Activated T-helper 2 cell treated with anti-CD3 and anti-CD28 coated beads, Interferon-gamma antibody, Interleukin-2, Interleukin-4, amounts not matched to agents 10 μg/mL and 5 μg/mL and 100 μg/mL, durations not matched to agents 14 hours and 24 hours and 36 hours (primary cell): ENCODE measurements at regions of chr14 and their contacts with region 1.

Region 1: DNA sequence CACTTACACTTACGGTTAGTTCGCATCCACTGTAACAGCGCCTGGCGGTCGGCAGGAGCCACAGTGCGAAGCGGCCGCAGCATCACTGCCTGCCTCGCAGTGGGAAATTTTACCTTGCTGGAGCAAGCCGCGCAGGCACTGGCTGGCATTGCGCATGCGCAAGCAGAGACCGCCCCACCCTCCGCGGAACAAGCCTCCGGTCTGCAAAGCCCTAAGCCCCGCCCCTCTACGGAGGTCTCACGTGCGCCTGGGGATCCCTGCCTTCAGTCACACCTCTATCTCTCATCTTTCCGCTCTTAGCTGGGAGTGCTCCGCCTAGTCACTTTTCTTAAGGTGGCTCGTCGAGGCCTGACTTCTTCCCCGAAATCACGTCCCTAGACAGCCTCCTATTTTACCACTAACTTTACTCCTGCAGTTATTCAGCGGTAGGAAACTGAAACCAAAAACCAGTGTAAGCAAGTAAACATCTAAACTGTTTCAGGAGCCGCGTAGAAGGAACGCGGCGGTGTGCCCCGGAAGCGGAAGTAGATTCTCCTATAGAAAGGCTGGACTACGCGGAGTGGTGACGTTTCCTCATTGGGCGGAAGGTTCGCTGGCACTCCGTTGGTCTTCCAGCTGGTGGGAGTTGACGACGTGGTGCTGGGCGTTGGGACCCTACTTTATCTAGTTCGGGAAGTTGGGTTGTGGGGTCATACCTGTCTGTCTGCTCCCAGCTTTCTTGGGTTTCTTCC is at the start of gene SRP54:
- DNase-seq: peak; percentile 100
- H3K4me3 Mint-ChIP-seq: no peak within 1 kb of the TSS
- H3K27ac Mint-ChIP-seq: no peak within 1 kb of the TSS
- H3K4me1 Mint-ChIP-seq: peaks cover 20% of the 10 kb centered on the region
- H3K27me3 Mint-ChIP-seq: no peaks in the 10 kb centered on the region
- total RNA-seq, gene SRP54: 78.9 and 82.4 TPM in 2 replicates

Region 2: DNA sequence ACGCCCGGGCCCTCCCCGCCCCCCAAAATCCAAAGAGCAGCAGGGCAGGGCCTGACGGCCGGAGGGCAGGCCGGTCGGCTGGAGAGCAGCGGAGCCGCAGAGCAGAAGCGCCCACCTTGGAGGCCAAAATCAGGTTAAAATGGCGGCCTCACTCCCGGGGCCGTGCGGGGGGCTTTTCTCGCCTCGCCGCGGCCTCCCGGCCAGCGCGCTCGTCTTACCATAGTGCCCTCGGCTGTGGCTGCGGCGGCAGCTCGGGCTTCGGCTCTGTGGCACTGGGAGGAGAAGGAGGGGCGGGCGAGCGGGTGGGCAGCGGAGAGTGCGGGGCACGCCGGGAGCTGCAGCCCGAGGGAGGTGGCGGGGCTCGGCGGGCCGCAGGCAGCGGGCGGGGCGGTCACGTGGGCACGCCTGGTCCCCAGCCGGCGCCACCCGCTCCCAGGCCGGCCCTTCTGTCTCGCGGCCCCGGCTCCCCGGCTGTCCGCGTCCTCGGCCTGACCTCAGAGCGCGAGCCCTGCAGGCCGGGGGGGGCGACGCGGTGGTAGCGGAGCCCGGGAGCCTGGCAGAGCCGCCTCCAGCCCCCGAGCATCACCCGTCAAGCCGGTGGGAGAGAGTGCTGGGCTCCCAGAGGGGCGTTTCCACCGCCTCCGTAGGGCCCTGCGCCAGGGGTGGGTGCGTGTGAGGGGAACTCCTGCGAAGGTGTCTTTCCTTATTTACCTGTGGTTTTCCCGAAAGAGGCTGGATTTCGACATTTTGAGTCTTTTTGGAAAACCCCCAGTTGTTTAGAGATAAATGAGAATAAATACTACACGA is 268.1 kb before region 1 on chr14 and contains the start of gene CFL2:
- intact Hi-C with region 1: loop called (anchors 5 kb)
- DNase-seq: peak; percentile 57
- H3K4me3 Mint-ChIP-seq: peak within 1 kb of the TSS; percentile 89
- H3K27ac Mint-ChIP-seq: peak within 1 kb of the TSS; percentile 90
- H3K4me1 Mint-ChIP-seq: peaks cover 28% of the 10 kb centered on the region
- H3K27me3 Mint-ChIP-seq: peaks cover 16% of the 10 kb centered on the region
- total RNA-seq, gene CFL2: 7.1 and 8.4 TPM in 2 replicates

Region 3: DNA sequence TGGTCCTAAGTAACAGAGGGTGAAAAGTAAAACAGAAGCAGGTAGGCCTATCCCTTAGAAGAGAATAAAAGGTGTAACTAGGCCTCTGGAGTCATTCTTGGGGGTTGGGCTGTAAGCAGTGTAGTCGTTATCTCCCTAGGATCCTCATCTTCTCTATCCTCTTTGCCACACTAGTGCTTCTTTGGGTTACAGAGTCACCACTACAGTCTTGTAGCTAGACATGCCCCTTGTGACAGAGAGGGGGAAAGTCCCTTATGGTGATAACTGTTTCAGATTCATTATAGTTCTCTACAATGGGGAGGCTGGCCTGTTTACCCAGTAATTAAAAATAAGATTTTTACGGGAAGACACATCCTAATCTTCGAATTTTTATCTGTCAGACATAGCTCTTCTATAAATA is 16.2 kb before region 1 on chr14:
- intact Hi-C with region 1: loop called (anchors 1 kb)
- DNase-seq: no peak
- H3K4me3 Mint-ChIP-seq: no peak overlapping the region
- H3K27ac Mint-ChIP-seq: peak overlapping the region; percentile 43
- H3K4me1 Mint-ChIP-seq: peaks cover 16% of the 10 kb centered on the region
- H3K27me3 Mint-ChIP-seq: no peaks in the 10 kb centered on the region

Region 4: DNA sequence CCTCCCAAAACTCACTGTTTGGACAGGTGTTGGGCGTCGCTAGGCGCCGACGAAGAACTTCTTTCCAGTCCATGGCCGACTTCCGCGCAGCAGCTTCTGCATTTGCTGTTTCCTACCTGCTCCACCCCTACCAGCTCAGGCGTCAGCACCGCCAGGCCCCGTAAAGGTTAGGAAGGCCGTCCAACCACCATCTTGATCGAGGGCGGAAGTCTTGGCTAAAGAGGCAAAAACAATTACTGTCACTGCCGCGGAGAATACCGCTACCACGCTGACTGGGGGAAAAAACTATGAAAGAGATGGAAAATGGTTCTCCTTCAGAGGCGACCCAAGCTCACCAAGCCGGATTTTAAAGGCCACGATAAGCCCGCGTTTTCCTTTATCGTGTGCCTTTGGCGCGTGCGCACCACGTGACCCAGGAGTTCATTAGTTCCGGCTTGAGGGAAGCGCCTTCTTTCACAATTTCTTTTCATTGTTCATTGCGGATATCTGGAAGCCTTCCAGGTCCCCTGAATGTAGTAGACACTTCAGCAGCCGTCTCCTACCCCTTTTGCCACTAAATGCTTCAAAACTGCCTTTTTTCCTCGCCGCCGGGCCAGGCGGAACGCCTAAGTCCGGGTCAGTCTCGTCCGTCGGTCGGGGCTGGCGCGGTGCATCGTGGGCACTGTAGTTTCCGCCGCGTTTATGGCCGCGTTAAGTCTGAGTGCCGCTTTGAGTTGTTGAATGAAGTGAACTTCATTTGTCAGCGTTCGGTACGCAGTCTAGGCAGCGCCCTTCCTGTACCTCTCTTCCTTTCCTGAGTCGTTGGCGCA is 139.5 kb after region 1 on chr14 and contains the starts of genes PPP2R3C and PRORP:
- intact Hi-C with region 1: loop called (anchors 1 kb)
- DNase-seq: peak; percentile 88
- H3K4me3 Mint-ChIP-seq: peak within 1 kb of the TSS; percentile 96
- H3K27ac Mint-ChIP-seq: peak within 1 kb of the TSS; percentile 100
- H3K4me1 Mint-ChIP-seq: peaks cover 41% of the 10 kb centered on the region
- H3K27me3 Mint-ChIP-seq: no peaks in the 10 kb centered on the region
- total RNA-seq, gene PPP2R3C: 48.1 and 49.7 TPM in 2 replicates
- total RNA-seq, gene PRORP: 37.0 and 41.3 TPM in 2 replicates

Region 5: DNA sequence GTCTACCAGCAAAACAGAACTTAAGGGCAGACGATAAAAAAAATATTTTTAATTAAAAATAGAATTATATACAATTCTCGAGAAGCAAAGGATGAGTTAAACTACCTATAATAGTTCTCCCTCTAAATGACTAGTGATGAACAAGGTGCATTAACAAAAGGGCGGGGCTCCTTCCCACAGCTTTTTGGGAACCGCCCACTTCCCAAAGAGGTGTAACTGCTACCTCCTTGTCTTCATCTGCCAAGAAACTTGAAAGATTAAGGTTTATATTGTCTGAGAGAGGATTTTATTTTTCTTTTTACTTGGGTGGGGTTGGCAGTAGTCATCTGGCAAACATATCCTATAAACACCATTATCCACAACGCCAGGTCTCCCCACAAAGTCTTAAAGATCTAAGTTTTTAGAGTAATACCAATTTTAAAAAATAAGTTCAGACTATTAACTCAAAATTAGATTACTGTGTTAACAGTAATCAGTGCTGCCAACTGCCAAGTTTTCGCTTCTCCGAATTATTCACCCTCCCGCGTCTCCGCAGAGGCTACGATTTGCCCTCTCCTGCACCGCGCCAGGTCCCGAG is 825.6 kb after region 1 on chr14:
- intact Hi-C with region 1: loop called (anchors 10 kb)
- DNase-seq: no peak
- H3K4me3 Mint-ChIP-seq: peak overlapping the region; percentile 99
- H3K27ac Mint-ChIP-seq: peak overlapping the region; percentile 94
- H3K4me1 Mint-ChIP-seq: peaks cover 21% of the 10 kb centered on the region
- H3K27me3 Mint-ChIP-seq: peaks cover 7% of the 10 kb centered on the region